Activated CD4-positive, alpha-beta memory T cell treated with anti-CD3 and anti-CD28 coated beads for 36 hours (primary cell): ENCODE measurements at regions of chr1 and their contacts with region 1.

Region 1: DNA sequence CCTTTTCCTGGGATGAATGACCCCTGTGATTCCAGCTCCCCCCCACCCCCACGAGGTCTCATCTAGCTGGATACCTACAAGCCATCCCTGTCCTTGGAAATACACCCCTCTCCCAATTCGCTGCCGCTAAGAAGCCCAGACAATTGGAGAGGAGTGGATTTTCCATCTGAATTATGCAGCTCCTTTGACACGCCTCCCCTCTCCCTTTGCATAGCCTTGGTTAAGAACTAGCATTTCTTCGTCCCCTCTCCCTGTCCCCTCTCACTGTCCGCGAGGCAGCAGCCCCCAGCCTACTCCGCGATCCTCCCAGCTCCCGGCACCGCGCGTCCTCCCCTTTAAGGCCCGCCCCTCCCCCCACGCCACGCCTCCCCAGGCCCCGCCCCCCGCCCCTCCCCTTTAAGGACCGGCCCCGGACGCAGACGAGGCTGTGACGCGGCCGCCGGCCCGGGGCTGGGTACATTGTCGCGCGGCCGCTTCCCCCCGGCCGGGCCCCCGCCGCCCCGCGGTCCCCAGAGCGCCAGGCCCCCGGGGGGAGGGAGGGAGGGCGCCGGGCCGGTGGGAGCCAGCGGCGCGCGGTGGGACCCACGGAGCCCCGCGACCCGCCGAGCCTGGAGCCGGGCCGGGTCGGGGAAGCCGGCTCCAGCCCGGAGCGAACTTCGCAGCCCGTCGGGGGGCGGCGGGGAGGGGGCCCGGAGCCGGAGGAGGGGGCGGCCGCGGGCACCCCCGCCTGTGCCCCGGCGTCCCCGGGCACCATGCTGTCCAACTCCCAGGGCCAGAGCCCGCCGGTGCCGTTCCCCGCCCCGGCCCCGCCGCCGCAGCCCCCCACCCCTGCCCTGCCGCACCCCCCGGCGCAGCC is at the start of gene MAPKAPK2:
- DNase-seq: peak; percentile 83
- H3K4me3 Mint-ChIP-seq: peak within 1 kb of the TSS; percentile 90
- H3K27ac Mint-ChIP-seq: peak within 1 kb of the TSS; percentile 95
- H3K4me1 Mint-ChIP-seq: peaks cover 58% of the 10 kb centered on the region
- H3K27me3 Mint-ChIP-seq: peaks cover 1% of the 10 kb centered on the region
- total RNA-seq, gene MAPKAPK2: 96.9 to 97.4 TPM

Region 2: GRCh38 chr1:206700445-206701036 is 15.8 kb after region 1 on chr1:
- CTCF ChIA-PET with region 1: no interaction called
- POLR2A ChIA-PET with region 1: interaction called, 14 read pairs
- intact Hi-C with region 1: loop called (anchors 1 kb)
- DNase-seq: no peak
- H3K4me3 Mint-ChIP-seq: no peak overlapping the region
- H3K27ac Mint-ChIP-seq: peak overlapping the region; percentile 43
- H3K4me1 Mint-ChIP-seq: peaks cover 89% of the 10 kb centered on the region
- H3K27me3 Mint-ChIP-seq: no peaks in the 10 kb centered on the region

Region 3: GRCh38 chr1:206706298-206706791 is 21.6 kb after region 1 on chr1:
- CTCF ChIA-PET with region 1: interaction called, 3 read pairs
- POLR2A ChIA-PET with region 1: interaction called, 14 read pairs
- intact Hi-C with region 1: loop called (anchors 1 kb)
- DNase-seq: peak; percentile 88
- H3K4me3 Mint-ChIP-seq: no peak overlapping the region
- H3K27ac Mint-ChIP-seq: peak overlapping the region; percentile 83
- H3K4me1 Mint-ChIP-seq: peaks cover 87% of the 10 kb centered on the region
- H3K27me3 Mint-ChIP-seq: no peaks in the 10 kb centered on the region

Region 4: DNA sequence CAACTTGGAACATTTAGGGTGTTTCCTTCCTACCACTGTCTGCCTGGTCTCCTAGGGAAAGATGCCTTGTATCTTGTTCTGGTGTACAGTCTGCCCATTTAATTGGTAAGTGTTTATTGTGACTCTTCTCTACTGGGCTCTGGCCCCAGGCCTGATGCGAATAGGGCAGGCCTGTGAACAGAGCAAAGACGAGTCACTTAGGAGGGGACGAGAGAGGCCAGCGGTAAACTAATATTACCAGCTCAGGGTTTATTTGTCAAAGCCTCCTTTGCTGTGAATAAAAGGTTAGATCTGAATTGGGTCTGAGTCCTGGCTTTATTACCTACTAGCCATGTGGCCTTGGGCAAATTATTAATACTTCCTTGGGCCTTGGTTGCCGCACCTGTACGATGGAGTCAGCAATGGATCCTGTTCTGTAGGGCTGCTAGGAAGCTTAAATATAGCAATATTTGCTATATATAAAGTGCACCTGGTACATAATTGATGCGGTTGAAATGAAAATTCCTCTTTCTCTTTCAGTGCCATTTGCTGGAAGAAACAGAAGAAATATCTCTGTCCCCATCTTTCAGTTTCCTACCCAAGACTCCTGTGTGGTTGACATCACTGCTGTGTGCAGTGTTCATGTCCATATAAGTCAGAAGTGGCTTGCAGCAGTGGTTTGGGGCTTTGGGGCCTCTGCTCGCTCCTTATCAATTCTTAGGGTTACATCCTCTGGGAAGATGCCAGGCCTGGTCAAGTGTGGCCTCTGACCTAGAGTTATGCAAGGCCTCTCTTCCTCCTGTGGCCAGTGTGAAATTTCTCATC is 32.4 kb after region 1 on chr1:
- CTCF ChIA-PET with region 1: no interaction called
- POLR2A ChIA-PET with region 1: no interaction called
- intact Hi-C with region 1: loop called (anchors 5 kb)
- DNase-seq: peak; percentile 45
- H3K4me3 Mint-ChIP-seq: no peak overlapping the region
- H3K27ac Mint-ChIP-seq: peak overlapping the region; percentile 61
- H3K4me1 Mint-ChIP-seq: peaks cover 83% of the 10 kb centered on the region
- H3K27me3 Mint-ChIP-seq: no peaks in the 10 kb centered on the region